Activated T-helper 1 cell treated with anti-CD3 and anti-CD28 coated beads, Interleukin-12 subunit alpha, Interleukin-12 subunit beta, Interleukin-2, Interleukin-4 antibody, amounts not matched to agents 30 ng/mL and 10 ng/mL and 1 ng/mL, durations not matched to agents 14 hours and 24 hours and 36 hours (primary cell): ENCODE measurements at regions of chr4 and their contacts with region 1.

Region 1: GRCh38 chr4:163107754-163108153 is 58.9 kb downstream of the NAF1 start:
- DNase-seq: no peak
- H3K4me3 Mint-ChIP-seq: no peak overlapping the region
- H3K27ac Mint-ChIP-seq: no peak overlapping the region
- H3K4me1 Mint-ChIP-seq: peaks cover 23% of the 10 kb centered on the region
- H3K27me3 Mint-ChIP-seq: no peaks in the 10 kb centered on the region

Region 2: DNA sequence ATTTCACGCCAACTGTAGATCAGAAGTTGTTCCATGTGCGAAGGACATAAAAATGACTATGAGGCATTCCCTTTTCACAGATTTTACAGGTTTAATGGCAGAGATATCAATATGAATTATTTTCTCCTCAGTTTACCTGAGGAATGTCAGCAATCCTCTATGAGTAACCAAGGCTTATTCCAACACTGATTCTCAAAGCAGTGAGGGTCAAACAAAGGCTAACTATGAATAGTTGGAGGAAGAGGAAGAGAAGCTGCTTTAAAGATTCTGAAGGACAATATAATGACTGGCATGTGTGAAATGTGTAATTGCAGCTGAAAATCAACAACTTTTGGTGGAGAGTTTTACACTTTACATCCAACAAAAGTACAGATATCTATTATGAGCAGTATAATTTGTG is 29.8 kb after region 1 on chr4:
- intact Hi-C with region 1: no loop called
- DNase-seq: no peak
- H3K4me3 Mint-ChIP-seq: no peak overlapping the region
- H3K27ac Mint-ChIP-seq: no peak overlapping the region
- H3K4me1 Mint-ChIP-seq: no peaks in the 10 kb centered on the region
- H3K27me3 Mint-ChIP-seq: no peaks in the 10 kb centered on the region

Region 3: GRCh38 chr4:163295138-163295537 is 187.4 kb after region 1 on chr4:
- intact Hi-C with region 1: no loop called
- DNase-seq: no peak
- H3K4me3 Mint-ChIP-seq: no peak overlapping the region
- H3K27ac Mint-ChIP-seq: no peak overlapping the region
- H3K4me1 Mint-ChIP-seq: no peaks in the 10 kb centered on the region
- H3K27me3 Mint-ChIP-seq: no peaks in the 10 kb centered on the region

Region 4: DNA sequence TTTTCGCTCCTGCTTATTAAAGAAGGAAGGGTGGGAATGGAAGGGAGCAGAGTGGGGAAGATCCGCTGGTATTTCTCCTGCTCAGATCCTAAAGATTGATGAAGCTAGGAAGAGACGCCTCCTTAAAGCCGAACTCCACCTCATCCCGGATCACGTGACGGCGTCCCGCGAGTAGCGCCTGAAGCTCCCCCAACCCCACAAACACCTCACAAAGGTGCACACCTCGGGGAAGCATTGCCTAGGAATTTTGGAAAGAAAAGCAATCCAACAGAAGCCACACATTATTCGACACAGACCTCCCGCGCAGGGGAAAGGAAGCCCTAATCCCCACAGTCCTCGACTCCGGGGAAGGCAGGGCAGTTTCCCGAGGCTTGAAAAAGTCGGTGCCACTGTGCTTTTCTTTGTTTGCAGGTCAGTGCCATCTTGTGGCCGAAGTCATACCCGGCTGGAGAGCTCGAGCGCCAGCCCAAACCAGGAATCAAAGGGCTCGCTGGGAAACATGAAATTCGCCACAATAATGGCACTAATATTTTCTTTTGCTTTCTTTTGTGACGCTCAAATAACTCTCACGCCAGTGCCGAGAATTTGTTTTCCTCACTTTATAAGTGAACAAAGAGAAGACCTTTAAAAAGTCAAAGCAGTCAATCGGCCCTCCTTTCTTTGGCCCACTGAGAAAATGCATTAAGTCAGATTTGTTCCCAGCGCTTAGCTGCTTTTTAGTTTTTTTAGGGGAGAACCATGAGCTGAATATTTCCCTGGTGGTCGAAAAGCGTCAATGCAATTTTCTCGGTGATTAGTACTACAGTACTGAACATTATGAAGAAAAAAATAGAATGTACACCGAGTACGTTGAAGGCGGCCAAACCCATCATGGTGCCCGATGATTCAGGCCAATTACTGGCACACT is 225.0 kb after region 1 on chr4 and contains the start of gene NPY1R:
- intact Hi-C with region 1: loop called (anchors 1 kb)
- DNase-seq: peak; percentile 1
- H3K4me3 Mint-ChIP-seq: peak within 1 kb of the TSS; percentile 69
- H3K27ac Mint-ChIP-seq: no peak within 1 kb of the TSS
- H3K4me1 Mint-ChIP-seq: peaks cover 10% of the 10 kb centered on the region
- H3K27me3 Mint-ChIP-seq: peaks cover 47% of the 10 kb centered on the region
- total RNA-seq, gene NPY1R: not detected in 2 replicates

Region 5: GRCh38 chr4:163494360-163495162 is 386.8 kb after region 1 on chr4 and contains the start of gene TMA16:
- intact Hi-C with region 1: loop called (anchors 5 kb)
- DNase-seq: peak; percentile 84
- H3K4me3 Mint-ChIP-seq: peak within 1 kb of the TSS; percentile 90
- H3K27ac Mint-ChIP-seq: peak within 1 kb of the TSS; percentile 98
- H3K4me1 Mint-ChIP-seq: peaks cover 23% of the 10 kb centered on the region
- H3K27me3 Mint-ChIP-seq: peaks cover 3% of the 10 kb centered on the region
- total RNA-seq, gene TMA16: 76.3 and 80.8 TPM in 2 replicates

Region 6: GRCh38 chr4:164464313-164464712 is 1356.6 kb after region 1 on chr4:
- intact Hi-C with region 1: no loop called
- DNase-seq: no peak
- H3K4me3 Mint-ChIP-seq: no peak overlapping the region
- H3K27ac Mint-ChIP-seq: no peak overlapping the region
- H3K4me1 Mint-ChIP-seq: no peaks in the 10 kb centered on the region
- H3K27me3 Mint-ChIP-seq: no peaks in the 10 kb centered on the region